CD4-positive, alpha-beta T cell (primary cell): ENCODE measurements at regions of chr1 and their contacts with region 1.

Region 1: DNA sequence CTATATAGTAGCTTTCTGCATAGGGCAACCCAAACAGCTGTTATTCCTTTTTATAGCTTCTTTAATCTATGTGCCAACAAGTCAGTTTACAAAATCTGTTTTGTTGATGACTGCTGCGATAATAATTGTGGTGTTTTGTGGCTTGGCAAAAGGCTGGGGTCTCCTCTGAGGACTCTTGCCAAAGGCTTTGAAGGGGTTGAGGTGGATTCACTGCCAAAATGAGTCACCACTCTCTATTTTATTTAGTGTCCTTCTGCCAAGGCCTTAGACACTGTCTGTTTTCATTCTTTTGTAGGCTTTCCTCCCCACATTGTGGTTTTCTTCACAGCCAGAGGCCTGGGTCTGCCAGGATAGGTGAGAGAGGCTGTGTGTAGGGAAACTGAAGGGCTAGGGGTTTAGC is 161.8 kb downstream of the NFIA start:
- DNase-seq: no peak
- ATAC-seq: no peak
- H3K4me3 ChIP-seq: no peak overlapping the region
- H3K4me3 Mint-ChIP-seq: no peak overlapping the region
- H3K27ac ChIP-seq: no peak overlapping the region
- H3K27ac Mint-ChIP-seq: no peak overlapping the region
- H3K4me1 ChIP-seq: no peaks in the 10 kb centered on the region
- H3K4me1 Mint-ChIP-seq: no peaks in the 10 kb centered on the region
- H3K27me3 ChIP-seq: no peaks in the 10 kb centered on the region
- H3K27me3 Mint-ChIP-seq: no peaks in the 10 kb centered on the region
- CTCF ChIP-seq: no peak

Region 2: GRCh38 chr1:61254634-61255357 is 10.7 kb after region 1 on chr1:
- CTCF ChIA-PET with region 1: no interaction called
- POLR2A ChIA-PET with region 1: no interaction called
- intact Hi-C with region 1: no loop called
- DNase-seq: peak in 2 of 14 experiments; percentile 4 to 32
- ATAC-seq: no peak
- H3K4me3 ChIP-seq: no peak overlapping the region
- H3K4me3 Mint-ChIP-seq: peak overlapping the region; percentile 32
- H3K27ac ChIP-seq: no peak overlapping the region
- H3K27ac Mint-ChIP-seq: no peak overlapping the region
- H3K4me1 ChIP-seq: peaks cover 4% of the 10 kb centered on the region
- H3K4me1 Mint-ChIP-seq: peaks cover 23% of the 10 kb centered on the region
- H3K27me3 ChIP-seq: no peaks in the 10 kb centered on the region
- H3K27me3 Mint-ChIP-seq: no peaks in the 10 kb centered on the region
- CTCF ChIP-seq: no peak

Region 3: GRCh38 chr1:61297887-61298286 is 53.8 kb after region 1 on chr1:
- CTCF ChIA-PET with region 1: no interaction called
- POLR2A ChIA-PET with region 1: no interaction called
- intact Hi-C with region 1: loop called in 1 of 2 experiments (anchors 1 kb)
- DNase-seq: no peak
- ATAC-seq: no peak
- H3K4me3 ChIP-seq: no peak overlapping the region
- H3K4me3 Mint-ChIP-seq: no peak overlapping the region
- H3K27ac ChIP-seq: no peak overlapping the region
- H3K27ac Mint-ChIP-seq: no peak overlapping the region
- H3K4me1 ChIP-seq: no peaks in the 10 kb centered on the region
- H3K4me1 Mint-ChIP-seq: no peaks in the 10 kb centered on the region
- H3K27me3 ChIP-seq: no peaks in the 10 kb centered on the region
- H3K27me3 Mint-ChIP-seq: no peaks in the 10 kb centered on the region
- CTCF ChIP-seq: no peak

Region 4: DNA sequence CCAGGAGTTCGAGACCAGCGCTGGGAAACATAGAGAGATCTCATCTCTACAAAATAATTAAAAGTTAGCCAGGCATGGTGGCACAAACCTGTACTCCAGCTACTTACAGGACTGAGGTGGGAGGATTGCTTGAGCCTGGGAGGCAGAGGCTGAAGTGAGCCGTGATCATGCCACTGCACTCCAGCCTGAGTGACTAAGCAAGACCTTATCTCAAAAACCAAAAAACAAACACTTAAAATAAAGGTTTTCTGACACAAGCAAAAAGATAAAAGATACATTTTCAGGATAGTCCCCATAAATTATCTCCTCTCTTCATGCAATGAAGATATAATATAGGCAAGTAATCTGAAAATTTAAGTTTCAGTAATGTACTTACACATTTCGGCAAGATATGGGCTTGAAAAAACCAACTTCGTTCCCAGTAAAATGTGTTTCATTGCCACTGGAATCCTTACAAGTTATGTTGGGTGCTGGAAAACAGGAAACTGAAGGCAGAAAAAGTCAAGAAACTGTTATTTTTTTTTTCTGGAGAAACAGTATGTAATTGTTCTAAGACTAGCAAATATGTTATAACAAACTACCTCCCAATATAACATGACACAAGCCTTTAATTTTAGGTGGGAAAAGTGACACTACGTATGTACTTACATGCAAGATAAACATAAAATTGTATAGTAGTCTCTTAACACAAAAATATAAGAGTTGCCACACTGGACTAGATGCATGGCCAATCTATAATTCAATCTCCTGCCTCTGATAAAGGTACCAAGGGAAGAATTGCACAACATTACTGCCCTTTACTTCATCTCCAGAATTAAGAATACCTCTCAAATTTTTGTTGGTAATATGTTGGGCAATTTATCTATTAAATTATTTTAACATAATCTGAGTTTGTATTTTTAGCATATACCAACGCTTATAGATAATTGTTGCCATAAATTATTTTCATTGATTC is 465.1 kb after region 1 on chr1:
- CTCF ChIA-PET with region 1: no interaction called
- POLR2A ChIA-PET with region 1: no interaction called
- intact Hi-C with region 1: no loop called
- DNase-seq: no peak
- ATAC-seq: no peak
- H3K4me3 ChIP-seq: no peak overlapping the region
- H3K4me3 Mint-ChIP-seq: no peak overlapping the region
- H3K27ac ChIP-seq: no peak overlapping the region
- H3K27ac Mint-ChIP-seq: no peak overlapping the region
- H3K4me1 ChIP-seq: no peaks in the 10 kb centered on the region
- H3K4me1 Mint-ChIP-seq: peaks cover 10% of the 10 kb centered on the region
- H3K27me3 ChIP-seq: no peaks in the 10 kb centered on the region
- H3K27me3 Mint-ChIP-seq: no peaks in the 10 kb centered on the region
- CTCF ChIP-seq: no peak